ENCODE measurements at regions of chr17 and their contacts with region 1.

Region 1: GRCh38 chr17:40791787-40792436 is 7.8 kb downstream of the KRT28 start:
- DNase-seq: no peak
- ATAC-seq: no peak
- H3K4me3 ChIP-seq: no peak overlapping the region
- H3K27ac ChIP-seq: no peak overlapping the region
- H3K4me1 ChIP-seq: peaks cover 0 to 10% (median 0%) of the 10 kb centered on the region in 12 donors
- H3K27me3 ChIP-seq: peaks cover 0 to 14% (median 0%) of the 10 kb centered on the region in 9 donors
- CTCF ChIP-seq: peak; percentile 26 to 67 (median 52)
- POLR2A ChIP-seq: no peak

Region 2: GRCh38 chr17:40615295-40615988 is 176.5 kb before region 1 on chr17:
- intact Hi-C with region 1: loop called in 9 of 10 experiments (anchors 2 to 5 kb)
- DNase-seq: peak in 1 of 5 donors; percentile 39
- ATAC-seq: peak in 2 of 4 donors; percentile 43 to 45
- H3K4me3 ChIP-seq: no peak overlapping the region
- H3K27ac ChIP-seq: peak overlapping the region in 1 of 12 donors; percentile 32
- H3K4me1 ChIP-seq: peaks cover 0 to 25% (median 0%) of the 10 kb centered on the region in 12 donors
- H3K27me3 ChIP-seq: peaks cover 0 to 47% (median 4%) of the 10 kb centered on the region in 9 donors
- CTCF ChIP-seq: peak in 9 of 12 donors; percentile 7 to 42 (median 24)
- POLR2A ChIP-seq: no peak

Region 3: GRCh38 chr17:40622509-40622928 is 169.4 kb before region 1 on chr17:
- intact Hi-C with region 1: loop called in 9 of 10 experiments (anchors 2 to 5 kb)
- DNase-seq: no peak
- ATAC-seq: no peak
- H3K4me3 ChIP-seq: no peak overlapping the region
- H3K27ac ChIP-seq: no peak overlapping the region
- H3K4me1 ChIP-seq: peaks cover 0 to 24% (median 0%) of the 10 kb centered on the region in 12 donors
- H3K27me3 ChIP-seq: peaks cover 0 to 12% (median 0%) of the 10 kb centered on the region in 9 donors
- CTCF ChIP-seq: no peak
- POLR2A ChIP-seq: no peak

Region 4: GRCh38 chr17:40647624-40648383 is 144.1 kb before region 1 on chr17 and contains the start of gene SMARCE1:
- intact Hi-C with region 1: loop called in 2 of 10 experiments (anchors 10 kb)
- DNase-seq: peak; percentile 65 to 84 (median 75)
- ATAC-seq: peak; percentile 76 to 90 (median 90)
- H3K4me3 ChIP-seq: peak within 1 kb of the TSS; percentile 70 to 97 (median 90)
- H3K27ac ChIP-seq: peak within 1 kb of the TSS; percentile 95 to 100 (median 98)
- H3K4me1 ChIP-seq: peaks cover 0 to 38% (median 27%) of the 10 kb centered on the region in 12 donors
- H3K27me3 ChIP-seq: no peaks in the 10 kb centered on the region
- CTCF ChIP-seq: no peak
- POLR2A ChIP-seq: no peak
- total RNA-seq, gene SMARCE1: 51.8 to 88.0 (median 59.4) TPM

Region 5: GRCh38 chr17:41211845-41212466 is 420.0 kb after region 1 on chr17:
- intact Hi-C with region 1: loop called in 1 of 10 experiments (anchors 5 kb)
- DNase-seq: no peak
- ATAC-seq: no peak
- H3K4me3 ChIP-seq: no peak overlapping the region
- H3K27ac ChIP-seq: no peak overlapping the region
- H3K4me1 ChIP-seq: no peaks in the 10 kb centered on the region
- H3K27me3 ChIP-seq: peaks cover 0 to 44% (median 7%) of the 10 kb centered on the region in 9 donors
- CTCF ChIP-seq: no peak
- POLR2A ChIP-seq: no peak

Measured in heart left ventricle (tissue), 16 donors.